ENCODE measurements at regions of chr4 and their contacts with region 1.

Region 1: GRCh38 chr4:127880764-127881562 is at the start of gene PLK4:
- DNase-seq: peak; percentile 97
- H3K4me3 Mint-ChIP-seq: peak within 1 kb of the TSS; percentile 98
- H3K27ac Mint-ChIP-seq: peak within 1 kb of the TSS; percentile 98
- H3K4me1 Mint-ChIP-seq: peaks cover 18% of the 10 kb centered on the region
- H3K27me3 Mint-ChIP-seq: peaks cover 3% of the 10 kb centered on the region
- total RNA-seq, gene PLK4: 44.7 to 52.3 TPM

Region 2: DNA sequence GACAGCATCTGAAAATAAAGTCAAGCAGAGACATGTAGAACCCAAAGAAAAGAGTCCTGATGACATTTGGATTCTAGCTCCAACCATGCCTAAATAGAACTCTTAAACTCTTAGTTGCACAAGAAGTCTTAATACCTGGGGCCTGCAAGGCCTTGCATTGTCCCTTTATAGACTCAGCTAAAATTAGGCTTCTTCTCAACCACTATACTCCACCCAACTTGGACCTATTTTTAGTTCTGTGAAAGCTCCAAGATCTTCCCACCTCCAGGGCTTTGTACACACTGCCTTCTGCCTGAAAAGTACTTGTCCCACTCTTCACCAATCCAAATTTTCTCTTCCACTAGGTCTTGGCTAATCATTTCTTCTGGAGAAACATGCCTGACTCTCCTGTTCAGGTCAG is 36.2 kb after region 1 on chr4:
- CTCF ChIA-PET with region 1: no interaction called
- intact Hi-C with region 1: no loop called
- DNase-seq: no peak
- H3K4me3 Mint-ChIP-seq: no peak overlapping the region
- H3K27ac Mint-ChIP-seq: no peak overlapping the region
- H3K4me1 Mint-ChIP-seq: no peaks in the 10 kb centered on the region
- H3K27me3 Mint-ChIP-seq: no peaks in the 10 kb centered on the region

Region 3: DNA sequence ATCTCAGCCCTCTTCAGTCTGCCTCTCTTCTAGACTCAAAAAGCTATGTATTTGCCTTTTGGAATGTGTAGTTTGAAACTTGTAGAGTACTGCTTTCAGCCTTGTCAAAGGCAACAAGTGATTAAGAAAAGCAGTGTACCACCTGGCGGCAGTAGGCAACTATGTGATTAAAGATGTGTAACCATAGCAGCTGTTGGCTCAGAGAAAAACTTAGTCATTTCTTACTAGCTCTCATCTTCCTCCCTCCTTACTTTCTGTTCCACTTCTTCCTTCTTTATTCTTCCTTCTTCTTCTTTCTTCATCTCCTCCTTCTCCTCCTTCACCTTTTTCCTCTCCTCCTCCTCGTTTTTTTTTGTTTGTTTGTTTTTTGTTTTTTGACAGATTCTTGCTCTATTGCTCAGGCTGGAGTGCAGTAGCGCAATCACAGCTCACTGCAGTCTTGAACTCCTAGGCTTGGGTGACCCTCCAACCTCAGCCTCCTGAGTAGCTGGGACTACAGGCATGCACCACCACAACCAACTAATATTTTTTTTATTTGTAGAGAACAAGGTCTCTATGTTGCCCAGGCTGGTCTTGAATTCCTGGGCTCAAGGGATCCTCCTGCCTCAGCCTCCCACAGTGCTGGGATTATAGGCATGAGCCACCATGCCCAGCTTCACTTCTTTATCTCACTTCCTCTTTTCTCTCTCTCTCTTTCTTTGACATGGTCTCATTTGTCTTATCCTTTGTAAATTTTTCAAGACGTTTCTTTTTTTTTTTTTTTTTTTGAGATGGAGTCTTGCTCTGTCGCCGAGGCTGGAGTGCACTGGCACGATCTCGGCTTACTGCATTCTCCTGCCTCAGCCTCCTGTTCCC is 116.8 kb after region 1 on chr4:
- CTCF ChIA-PET with region 1: no interaction called
- intact Hi-C with region 1: loop called (anchors 2 kb)
- DNase-seq: peak; percentile 67
- H3K4me3 Mint-ChIP-seq: no peak overlapping the region
- H3K27ac Mint-ChIP-seq: peak overlapping the region; percentile 62
- H3K4me1 Mint-ChIP-seq: peaks cover 32% of the 10 kb centered on the region
- H3K27me3 Mint-ChIP-seq: no peaks in the 10 kb centered on the region

Region 4: GRCh38 chr4:128060699-128061565 is 180.0 kb after region 1 on chr4 and contains the start of gene LARP1B:
- CTCF ChIA-PET with region 1: no interaction called
- intact Hi-C with region 1: loop called (anchors 1 kb)
- DNase-seq: peak; percentile 94
- H3K4me3 Mint-ChIP-seq: peak within 1 kb of the TSS; percentile 82
- H3K27ac Mint-ChIP-seq: peak within 1 kb of the TSS; percentile 81
- H3K4me1 Mint-ChIP-seq: peaks cover 16% of the 10 kb centered on the region
- H3K27me3 Mint-ChIP-seq: no peaks in the 10 kb centered on the region
- total RNA-seq, gene LARP1B: 17.6 to 18.9 TPM

Region 5: DNA sequence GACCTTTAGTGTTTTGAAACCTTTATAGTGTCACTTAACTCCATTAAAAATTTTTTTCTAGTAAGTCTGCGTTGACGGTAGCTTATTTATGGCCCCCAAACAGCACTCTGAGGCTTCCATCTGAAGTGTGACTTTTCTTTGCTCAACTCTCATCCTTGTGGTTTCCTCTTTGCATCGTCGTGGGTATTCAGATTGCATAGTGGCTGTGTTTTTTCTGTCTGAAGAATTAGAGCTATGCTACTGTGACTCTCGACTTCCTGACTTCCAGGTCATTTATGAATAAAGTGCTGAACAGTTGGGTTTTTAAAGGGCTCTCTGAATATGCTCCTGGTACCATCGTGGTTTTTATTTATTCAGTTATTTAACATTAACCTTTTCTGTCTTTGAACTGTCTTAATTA is 973.5 kb after region 1 on chr4:
- CTCF ChIA-PET with region 1: no interaction called
- intact Hi-C with region 1: loop called (anchors 5 kb)
- DNase-seq: peak; percentile 27
- H3K4me3 Mint-ChIP-seq: no peak overlapping the region
- H3K27ac Mint-ChIP-seq: peak overlapping the region; percentile 78
- H3K4me1 Mint-ChIP-seq: peaks cover 28% of the 10 kb centered on the region
- H3K27me3 Mint-ChIP-seq: no peaks in the 10 kb centered on the region